ENCODE measurements at regions of chr7 and their contacts with region 1.

Region 1: GRCh38 chr7:98300595-98301372 is 19.3 kb downstream of the BRI3 start:
- DNase-seq: no peak
- H3K4me3 ChIP-seq: no peak overlapping the region
- H3K27ac ChIP-seq: no peak overlapping the region
- H3K27me3 ChIP-seq: no peaks in the 10 kb centered on the region
- CTCF ChIP-seq: no peak

Region 2: GRCh38 chr7:98341106-98341505 is 40.3 kb after region 1 on chr7:
- intact Hi-C with region 1: no loop called
- DNase-seq: no peak
- H3K4me3 ChIP-seq: no peak overlapping the region
- H3K27ac ChIP-seq: no peak overlapping the region
- H3K27me3 ChIP-seq: peaks cover 0 to 7% (median 0%) of the 10 kb centered on the region in 45 donors
- CTCF ChIP-seq: no peak

Region 3: DNA sequence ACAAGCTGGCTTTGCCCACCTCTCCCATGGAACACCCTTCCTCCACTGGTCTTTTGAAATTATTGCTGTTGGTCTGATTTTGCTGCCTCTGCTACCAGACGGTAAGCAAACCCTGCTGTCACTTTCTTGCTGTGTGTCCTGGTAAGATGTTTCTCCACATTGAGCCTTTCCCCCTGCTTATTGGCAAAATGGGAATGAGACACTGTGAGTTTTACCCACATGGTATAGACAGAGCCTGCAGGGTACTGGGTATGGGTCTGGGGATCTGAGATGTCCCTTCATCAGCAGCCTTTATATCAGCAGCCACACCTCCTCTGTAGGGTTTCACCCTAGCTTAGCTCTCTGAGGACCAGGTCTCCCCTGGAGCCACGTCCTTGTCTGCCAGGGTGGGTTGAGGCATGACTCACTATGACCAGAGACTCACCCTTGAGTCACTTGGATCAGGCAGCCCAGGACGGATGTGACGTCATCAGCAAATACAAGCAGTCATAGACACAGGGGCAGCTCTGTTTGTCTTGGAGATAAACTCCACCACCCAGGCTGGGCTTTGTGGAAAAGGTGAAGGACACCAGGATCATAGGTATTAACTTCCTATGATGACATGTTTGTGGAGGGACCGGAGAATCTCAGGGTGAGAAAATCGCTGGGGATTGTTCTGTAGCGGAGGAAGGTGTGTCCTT is 118.0 kb after region 1 on chr7:
- intact Hi-C with region 1: loop called in 1 of 2 experiments (anchors 10 kb)
- DNase-seq: no peak
- H3K4me3 ChIP-seq: no peak overlapping the region
- H3K27ac ChIP-seq: no peak overlapping the region
- H3K27me3 ChIP-seq: peaks cover 0 to 25% (median 5%) of the 10 kb centered on the region in 45 donors
- CTCF ChIP-seq: no peak

Measured in dorsolateral prefrontal cortex (tissue), 120 donors.